Activated naive CD4-positive, alpha-beta T cell treated with anti-CD3 and anti-CD28 coated beads, Interleukin-2, amount 10 ng/mL, durations not matched to agents 7 days and 5 days (primary cell): ENCODE measurements at regions of chr15 and their contacts with region 1.

Region 1: GRCh38 chr15:64681424-64682024 is 93.9 kb downstream of the RBPMS2 start:
- DNase-seq: peak; percentile 26
- H3K4me3 Mint-ChIP-seq: no peak overlapping the region
- H3K27ac Mint-ChIP-seq: no peak overlapping the region
- H3K4me1 Mint-ChIP-seq: no peaks in the 10 kb centered on the region
- H3K27me3 Mint-ChIP-seq: no peaks in the 10 kb centered on the region

Region 2: DNA sequence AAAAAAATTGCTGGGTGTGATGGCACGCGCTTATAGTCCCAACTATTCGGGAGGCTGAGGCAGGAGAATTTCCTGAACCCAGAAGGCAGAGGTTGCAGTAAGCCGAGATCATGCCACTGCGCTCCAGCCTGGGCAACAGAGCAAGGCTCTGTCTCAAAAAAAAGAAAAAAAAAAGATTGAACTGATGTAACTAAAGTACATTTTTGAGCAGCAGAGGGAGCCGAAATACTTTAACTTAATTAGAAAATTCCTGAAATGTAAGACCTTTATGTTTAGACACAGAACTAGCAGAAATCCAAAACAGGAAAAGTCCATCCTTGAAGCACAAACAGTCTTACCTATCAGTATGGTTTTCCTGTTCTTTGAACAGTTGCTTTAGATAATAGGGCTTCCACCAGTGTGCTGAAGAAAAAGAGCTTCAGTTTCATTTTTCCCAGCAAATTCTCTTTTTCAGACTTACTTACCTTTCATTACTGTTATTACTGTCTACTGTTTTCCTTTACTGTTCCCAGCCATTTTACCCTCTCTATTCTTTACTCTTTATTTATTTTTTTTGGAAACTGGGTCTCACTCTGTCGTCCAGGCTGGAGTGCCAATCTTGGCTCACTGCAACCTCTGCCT is 254.6 kb before region 1 on chr15:
- CTCF ChIA-PET with region 1: interaction called, 13 read pairs
- DNase-seq: no peak
- H3K4me3 Mint-ChIP-seq: no peak overlapping the region
- H3K27ac Mint-ChIP-seq: peak overlapping the region; percentile 17
- H3K4me1 Mint-ChIP-seq: peaks cover 49% of the 10 kb centered on the region
- H3K27me3 Mint-ChIP-seq: no peaks in the 10 kb centered on the region

Region 3: GRCh38 chr15:64443747-64444621 is 237.5 kb before region 1 on chr15:
- CTCF ChIA-PET with region 1: no interaction called
- DNase-seq: no peak
- H3K4me3 Mint-ChIP-seq: peak overlapping the region; percentile 8
- H3K27ac Mint-ChIP-seq: peak overlapping the region; percentile 82
- H3K4me1 Mint-ChIP-seq: peaks cover 58% of the 10 kb centered on the region
- H3K27me3 Mint-ChIP-seq: no peaks in the 10 kb centered on the region

Region 4: GRCh38 chr15:64695561-64695992 is 14.1 kb after region 1 on chr15:
- CTCF ChIA-PET with region 1: interaction called, 11 read pairs
- DNase-seq: no peak
- H3K4me3 Mint-ChIP-seq: no peak overlapping the region
- H3K27ac Mint-ChIP-seq: no peak overlapping the region
- H3K4me1 Mint-ChIP-seq: peaks cover 29% of the 10 kb centered on the region
- H3K27me3 Mint-ChIP-seq: no peaks in the 10 kb centered on the region